Astrocyte of the spinal cord (primary cell): ENCODE measurements at regions of chr1 and their contacts with region 1.

Region 1: DNA sequence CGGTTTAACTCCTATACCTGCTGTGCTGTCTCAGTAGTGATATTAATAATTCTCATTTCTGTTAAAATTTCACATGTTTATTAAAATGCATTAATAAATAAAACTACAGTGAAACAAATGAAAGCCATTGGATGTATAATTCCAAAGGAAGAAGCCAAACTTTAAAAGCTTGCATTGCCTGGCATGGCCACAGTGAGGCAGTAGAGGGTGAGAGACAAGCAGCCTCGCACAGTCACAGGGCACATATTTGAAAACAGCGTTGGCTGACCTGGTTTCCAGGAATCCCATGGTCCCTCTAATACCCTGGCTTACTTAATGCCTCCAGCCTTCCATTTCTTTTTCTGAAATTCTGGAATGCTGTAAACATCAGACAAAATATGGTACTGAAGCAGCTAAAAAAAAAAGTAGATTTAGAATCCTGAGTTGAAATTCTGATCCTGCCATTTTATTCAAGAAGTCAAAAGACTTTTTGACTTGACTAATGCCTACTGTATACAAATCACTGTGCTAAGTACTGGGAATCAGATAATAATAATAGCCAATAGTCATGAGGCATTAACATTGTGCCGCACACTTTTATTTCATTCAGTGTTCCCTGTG is 6.7 kb upstream of the RNASEL start:
- DNase-seq: peak; percentile 65
- H3K4me3 ChIP-seq: no peak overlapping the region
- CTCF ChIP-seq: peak; percentile 95

Region 2: GRCh38 chr1:182789138-182790076 is 193.7 kb after region 1 on chr1 and contains the start of gene NPL:
- in situ Hi-C with region 1: loop called (anchors 10 kb)
- DNase-seq: peak; percentile 76
- H3K4me3 ChIP-seq: peak within 1 kb of the TSS; percentile 58
- CTCF ChIP-seq: no peak

Region 3: DNA sequence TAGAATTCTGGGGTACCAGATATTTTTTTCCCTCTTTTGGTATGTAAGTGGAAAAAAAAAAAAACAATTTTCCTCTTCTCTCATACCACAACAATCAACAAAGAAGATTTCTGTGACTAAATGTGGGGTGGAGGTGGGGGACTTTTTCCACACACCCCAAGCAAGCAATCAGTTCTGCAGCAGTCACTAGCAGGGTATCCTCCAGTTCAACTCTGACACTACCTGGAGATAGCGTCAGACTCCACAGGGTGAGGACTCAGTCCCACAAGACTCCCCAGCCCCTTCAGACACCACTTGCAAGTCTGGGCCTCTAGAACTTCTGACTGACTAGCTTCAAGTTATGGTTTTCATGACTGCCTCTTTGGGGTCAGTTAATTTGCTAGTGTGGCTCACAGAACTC is 249.6 kb after region 1 on chr1:
- in situ Hi-C with region 1: no loop called
- DNase-seq: no peak
- H3K4me3 ChIP-seq: no peak overlapping the region
- CTCF ChIP-seq: no peak